Activated T-helper 1 cell treated with anti-CD3 and anti-CD28 coated beads, Interleukin-12 subunit alpha, Interleukin-12 subunit beta, Interleukin-2, Interleukin-4 antibody, amounts not matched to agents 30 ng/mL and 10 ng/mL and 1 ng/mL, durations not matched to agents 14 hours and 24 hours and 36 hours (primary cell): ENCODE measurements at regions of chr5 and their contacts with region 1.

Region 1: DNA sequence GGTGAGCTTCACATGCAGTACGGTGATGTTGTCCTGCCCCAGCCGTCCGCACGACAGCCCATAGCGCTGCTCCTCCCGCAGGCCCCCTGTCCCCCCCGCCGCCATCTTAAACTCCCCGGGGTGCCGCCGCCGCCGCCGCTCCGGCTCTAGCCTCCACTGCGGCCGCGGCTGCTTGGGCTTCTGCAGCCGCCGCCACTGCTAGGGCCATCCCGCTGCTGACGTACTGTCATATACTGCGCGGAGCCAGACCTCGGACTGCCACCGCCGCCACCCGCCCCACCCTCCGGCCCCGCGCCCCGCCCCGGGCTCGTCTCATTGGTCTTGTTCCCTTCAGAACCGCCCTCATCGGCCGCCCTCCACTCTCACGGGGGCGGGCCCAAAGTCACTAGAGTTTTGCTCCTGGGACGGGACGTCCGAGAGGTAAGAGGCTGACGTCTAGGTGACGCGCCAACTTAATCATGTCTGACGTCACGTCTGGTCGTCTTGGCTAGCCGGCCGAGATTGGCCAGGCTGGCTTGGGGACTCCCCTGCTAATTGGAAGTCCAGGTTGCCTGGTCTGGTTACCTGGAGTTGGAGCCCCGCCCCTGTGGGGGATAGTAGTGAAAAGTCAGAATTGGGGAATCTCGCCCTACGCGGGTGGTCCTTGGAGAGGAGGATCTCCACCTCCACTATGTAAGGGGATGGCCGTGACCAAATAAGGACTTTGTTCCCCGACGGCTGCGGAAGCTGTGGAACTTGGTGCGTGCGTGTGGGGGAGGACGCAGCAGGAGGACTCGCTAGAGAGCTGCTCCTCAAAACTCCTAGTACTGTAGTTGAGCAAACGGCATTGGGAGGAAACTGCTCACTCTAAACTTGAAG is at the start of gene ELL2:
- DNase-seq: peak; percentile 96
- H3K4me3 Mint-ChIP-seq: peak within 1 kb of the TSS; percentile 100
- H3K27ac Mint-ChIP-seq: peak within 1 kb of the TSS; percentile 99
- H3K4me1 Mint-ChIP-seq: peaks cover 55% of the 10 kb centered on the region
- H3K27me3 Mint-ChIP-seq: no peaks in the 10 kb centered on the region
- total RNA-seq, gene ELL2: 93.9 and 97.6 TPM in 2 replicates

Region 2: GRCh38 chr5:95554647-95555548 is 406.9 kb before region 1 on chr5 and contains the starts of genes ARSK and SKIC3:
- intact Hi-C with region 1: loop called (anchors 2 kb)
- DNase-seq: peak; percentile 90
- H3K4me3 Mint-ChIP-seq: peak within 1 kb of the TSS; percentile 94
- H3K27ac Mint-ChIP-seq: peak within 1 kb of the TSS; percentile 94
- H3K4me1 Mint-ChIP-seq: peaks cover 39% of the 10 kb centered on the region
- H3K27me3 Mint-ChIP-seq: no peaks in the 10 kb centered on the region
- total RNA-seq, gene ARSK: 3.9 and 4.2 TPM in 2 replicates
- total RNA-seq, gene SKIC3: 60.2 and 63.8 TPM in 2 replicates

Region 3: DNA sequence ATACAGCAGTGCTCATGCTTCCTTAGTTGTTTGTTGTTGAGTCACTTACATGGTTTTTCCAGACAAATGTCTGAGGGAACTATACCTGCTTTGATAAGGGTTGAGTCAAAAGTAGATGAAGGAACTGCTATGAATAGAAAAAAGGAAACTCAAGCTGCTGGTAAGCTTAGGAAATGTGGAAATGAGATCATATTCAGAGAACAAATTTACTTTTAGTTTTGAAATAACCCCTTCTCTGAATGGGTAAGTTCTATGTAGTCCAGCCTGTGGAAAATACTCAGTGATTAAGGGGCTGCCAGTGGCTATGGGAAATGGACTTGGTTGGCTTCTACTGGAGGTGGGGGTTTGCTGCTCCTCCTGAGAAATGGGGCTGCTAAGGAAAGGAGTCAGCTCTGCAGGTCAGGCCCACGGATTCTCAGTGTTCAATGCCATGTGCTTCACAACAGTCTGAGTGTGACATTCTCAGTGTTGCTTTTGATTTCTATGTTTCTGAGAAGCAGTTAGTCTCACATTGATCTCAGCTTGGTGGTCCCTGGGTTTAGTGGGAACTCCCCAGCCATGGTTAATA is 91.7 kb before region 1 on chr5:
- intact Hi-C with region 1: loop called (anchors 1 kb)
- DNase-seq: peak; percentile 20
- H3K4me3 Mint-ChIP-seq: peak overlapping the region; percentile 64
- H3K27ac Mint-ChIP-seq: peak overlapping the region; percentile 97
- H3K4me1 Mint-ChIP-seq: peaks cover 55% of the 10 kb centered on the region
- H3K27me3 Mint-ChIP-seq: no peaks in the 10 kb centered on the region

Region 4: DNA sequence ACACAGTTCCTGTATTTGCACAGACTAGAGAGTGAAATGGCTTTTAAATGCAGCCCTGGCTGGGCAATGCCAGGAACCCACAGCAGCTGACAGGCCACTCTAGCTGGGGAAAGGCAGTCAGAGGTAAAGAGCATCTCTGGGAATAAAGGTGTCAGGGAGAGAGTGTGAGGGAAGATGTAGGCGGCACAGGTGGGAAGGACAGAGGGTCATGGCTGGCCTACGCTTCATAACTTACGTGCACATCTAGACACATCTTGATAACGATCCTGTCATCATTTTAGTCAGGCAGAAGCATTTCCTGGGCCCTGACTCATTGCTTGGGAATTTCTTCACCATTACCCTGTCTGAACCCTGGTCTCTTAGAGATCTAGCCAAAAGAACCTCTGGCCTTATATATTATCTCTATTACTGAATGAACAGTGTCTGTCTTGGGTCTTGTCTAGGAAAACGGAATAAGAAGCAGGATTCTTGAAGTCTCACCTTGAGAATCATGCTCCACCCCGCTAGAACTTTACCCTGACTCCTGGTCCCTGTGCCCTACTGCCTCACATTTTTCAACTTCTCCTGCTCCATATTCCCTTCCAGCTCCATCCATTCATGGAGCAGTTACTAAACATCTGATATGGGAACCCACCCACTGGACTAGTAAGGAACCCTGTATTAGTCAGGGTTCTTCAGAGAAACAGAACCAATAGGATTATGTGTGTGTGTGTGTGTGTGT is 106.2 kb after region 1 on chr5:
- intact Hi-C with region 1: loop called (anchors 1 kb)
- DNase-seq: no peak
- H3K4me3 Mint-ChIP-seq: no peak overlapping the region
- H3K27ac Mint-ChIP-seq: peak overlapping the region; percentile 79
- H3K4me1 Mint-ChIP-seq: peaks cover 68% of the 10 kb centered on the region
- H3K27me3 Mint-ChIP-seq: no peaks in the 10 kb centered on the region

Region 5: GRCh38 chr5:96279801-96280542 is 318.1 kb after region 1 on chr5:
- intact Hi-C with region 1: loop called (anchors 1 kb)
- DNase-seq: peak; percentile 14
- H3K4me3 Mint-ChIP-seq: peak overlapping the region; percentile 27
- H3K27ac Mint-ChIP-seq: peak overlapping the region; percentile 56
- H3K4me1 Mint-ChIP-seq: peaks cover 40% of the 10 kb centered on the region
- H3K27me3 Mint-ChIP-seq: peaks cover 4% of the 10 kb centered on the region

Region 6: GRCh38 chr5:96662725-96663513 is 701.1 kb after region 1 on chr5:
- intact Hi-C with region 1: loop called (anchors 2 kb)
- DNase-seq: peak; percentile 82
- H3K4me3 Mint-ChIP-seq: peak overlapping the region; percentile 98
- H3K27ac Mint-ChIP-seq: peak overlapping the region; percentile 98
- H3K4me1 Mint-ChIP-seq: peaks cover 67% of the 10 kb centered on the region
- H3K27me3 Mint-ChIP-seq: peaks cover 11% of the 10 kb centered on the region